A549 (cell line): ENCODE measurements at regions of chr2 and their contacts with region 1.

Region 1: GRCh38 chr2:54704688-54705605 is 18.5 kb upstream of the EML6 start:
- DNase-seq: peak; percentile 40 to 74
- ATAC-seq: peak; percentile 81 to 89; a peak in 5 of 6 replicates
- H3K4me3 ChIP-seq: no peak overlapping the region
- H3K27ac ChIP-seq: no peak overlapping the region
- H3K4me1 ChIP-seq: no peaks in the 10 kb centered on the region
- CTCF ChIP-seq: peak; percentile 93
- EP300 ChIP-seq: no peak
- POLR2A ChIP-seq: no peak
- RAD21 ChIP-seq: peak; percentile 93 to 95

Region 2: DNA sequence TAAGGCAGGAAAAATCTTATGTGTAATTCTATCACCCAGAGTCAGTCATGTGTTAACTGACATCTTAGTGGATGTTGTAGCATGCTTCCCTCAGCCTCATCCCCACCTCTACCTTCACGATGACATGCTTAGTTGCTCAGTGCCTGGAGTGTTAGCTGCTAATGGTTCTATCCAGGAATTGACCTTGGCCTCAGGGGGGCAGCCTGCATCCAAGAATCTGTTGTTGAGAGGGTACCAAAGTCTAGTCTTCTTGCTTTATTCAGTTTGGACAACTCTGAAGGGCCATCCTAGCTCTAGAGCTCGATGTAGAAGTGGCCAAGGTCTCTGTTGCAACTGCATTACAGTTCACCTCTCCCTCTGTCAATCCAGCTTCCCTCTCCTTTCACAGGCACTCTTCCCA is 528.4 kb before region 1 on chr2:
- CTCF ChIA-PET with region 1: interaction called, 16 read pairs
- POLR2A ChIA-PET with region 1: no interaction called
- DNase-seq: peak in 1 of 2 experiments; percentile 42
- ATAC-seq: peak; percentile 90 to 91
- H3K4me3 ChIP-seq: no peak overlapping the region
- H3K27ac ChIP-seq: no peak overlapping the region
- H3K4me1 ChIP-seq: no peaks in the 10 kb centered on the region
- CTCF ChIP-seq: peak; percentile 41
- EP300 ChIP-seq: no peak
- POLR2A ChIP-seq: no peak
- RAD21 ChIP-seq: peak; percentile 63 to 72

Region 3: DNA sequence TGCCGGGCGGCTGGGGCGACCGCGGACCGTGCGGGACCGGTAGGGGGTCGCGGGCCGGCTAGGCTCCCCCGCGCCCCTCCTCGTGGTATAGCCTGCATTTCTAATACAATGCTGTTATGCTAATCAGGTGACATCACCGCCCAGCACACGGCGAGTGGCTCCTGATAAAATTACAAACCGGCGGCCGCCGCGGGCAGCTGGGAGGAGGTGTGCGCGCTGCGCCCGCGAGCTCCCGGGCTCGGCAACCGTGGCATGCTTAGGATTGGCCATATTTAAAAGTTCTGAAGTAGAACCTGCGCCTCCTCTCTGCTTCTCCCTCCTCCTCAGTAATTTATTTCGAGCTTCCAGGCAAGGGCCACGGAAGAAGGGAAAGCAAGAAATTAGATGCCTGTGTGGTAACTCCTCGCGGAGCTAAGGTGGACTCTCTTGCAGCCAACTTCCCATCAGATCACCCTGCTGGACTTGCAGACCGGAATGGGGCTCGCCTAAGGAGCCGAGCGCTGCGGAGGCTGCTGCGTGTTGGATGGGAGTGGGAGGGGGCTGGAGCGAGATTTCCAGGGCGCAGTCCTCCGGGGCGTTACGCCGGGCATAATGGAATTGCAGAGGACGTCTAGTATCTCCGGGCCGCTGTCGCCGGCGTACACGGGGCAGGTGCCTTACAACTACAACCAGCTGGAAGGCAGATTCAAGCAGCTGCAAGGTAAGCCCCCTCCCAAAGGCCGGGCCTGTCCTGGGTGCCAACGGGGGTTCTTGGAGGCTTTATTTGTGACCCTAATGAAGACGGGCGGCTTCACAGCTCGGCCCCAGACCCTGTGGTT is 146.6 kb before region 1 on chr2:
- CTCF ChIA-PET with region 1: interaction called, 12 read pairs
- POLR2A ChIA-PET with region 1: no interaction called
- DNase-seq: peak; percentile 61 to 78
- ATAC-seq: peak; percentile 73 to 79
- H3K4me3 ChIP-seq: peak overlapping the region; percentile 67
- H3K27ac ChIP-seq: peak overlapping the region; percentile 91 to 92
- H3K4me1 ChIP-seq: peaks cover 53% of the 10 kb centered on the region
- CTCF ChIP-seq: no peak
- EP300 ChIP-seq: 0 out of 5 replicates have a peak, but pooled peaks of 1 of the 2 experiments have one; percentile 21
- POLR2A ChIP-seq: peak; percentile 7; the same call in 1 of the 2 replicates
- RAD21 ChIP-seq: no peak; a peak in 2 of 5 replicates

Region 4: GRCh38 chr2:54665436-54665856 is 39.5 kb before region 1 on chr2:
- CTCF ChIA-PET with region 1: interaction called, 23 read pairs
- POLR2A ChIA-PET with region 1: no interaction called
- DNase-seq: peak in 1 of 2 experiments; percentile 73
- ATAC-seq: peak; percentile 32 to 73; a peak in 4 of 6 replicates
- H3K4me3 ChIP-seq: no peak overlapping the region
- H3K27ac ChIP-seq: peak overlapping the region; percentile 34 to 53; a peak in 5 of 6 replicates
- H3K4me1 ChIP-seq: peaks cover 45% of the 10 kb centered on the region
- CTCF ChIP-seq: peak; percentile 66
- EP300 ChIP-seq: no peak
- POLR2A ChIP-seq: no peak
- RAD21 ChIP-seq: peak; percentile 24 to 42; a peak in 2 of 5 replicates

Region 5: DNA sequence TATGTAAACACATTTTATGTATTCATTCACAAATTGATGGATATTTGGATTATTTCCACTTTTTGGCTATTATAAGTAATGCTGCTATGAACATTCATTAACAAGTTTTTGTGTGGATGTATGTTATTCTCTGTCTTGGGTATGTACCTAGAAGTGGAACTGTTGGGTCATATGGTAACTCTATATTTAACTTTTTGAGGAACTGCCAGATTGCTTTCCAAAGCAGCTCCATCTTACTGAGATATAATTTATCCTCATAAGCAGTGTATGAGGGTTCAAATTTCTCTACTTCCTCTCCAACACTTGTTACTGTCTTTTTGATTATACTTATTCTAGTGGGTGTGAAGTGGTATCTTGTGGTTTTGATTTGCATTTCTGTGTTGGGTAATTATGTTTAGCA is 11.4 kb after region 1 on chr2:
- CTCF ChIA-PET with region 1: interaction called, 46 read pairs
- POLR2A ChIA-PET with region 1: no interaction called
- DNase-seq: no peak
- ATAC-seq: no peak
- H3K4me3 ChIP-seq: no peak overlapping the region
- H3K27ac ChIP-seq: no peak overlapping the region
- H3K4me1 ChIP-seq: no peaks in the 10 kb centered on the region
- CTCF ChIP-seq: no peak
- EP300 ChIP-seq: no peak
- POLR2A ChIP-seq: no peak
- RAD21 ChIP-seq: no peak

Region 6: GRCh38 chr2:55133467-55134315 is 428.7 kb after region 1 on chr2:
- CTCF ChIA-PET with region 1: no interaction called
- POLR2A ChIA-PET with region 1: no interaction called
- DNase-seq: peak in 1 of 2 experiments; percentile 57
- ATAC-seq: peak in 1 of 2 experiments; percentile 62; a peak in 3 of 6 replicates
- H3K4me3 ChIP-seq: no peak overlapping the region
- H3K27ac ChIP-seq: 0 out of 6 replicates have a peak overlapping the region, but pooled peaks of 1 of the 2 experiments have one; percentile 0
- H3K4me1 ChIP-seq: 0 out of 3 replicates have a peak, but pooled peaks cover 6% of the 10 kb centered on the region
- CTCF ChIP-seq: no peak
- EP300 ChIP-seq: no peak
- POLR2A ChIP-seq: no peak
- RAD21 ChIP-seq: no peak